ENCODE measurements at regions of chr1 and their contacts with region 1.

Region 1: GRCh38 chr1:24932284-24932683 is 2.2 kb upstream of the RUNX3 start:
- H3K4me3 Mint-ChIP-seq: peak overlapping the region; percentile 34
- H3K27ac Mint-ChIP-seq: no peak overlapping the region
- H3K4me1 Mint-ChIP-seq: peaks cover 39% of the 10 kb centered on the region
- H3K27me3 Mint-ChIP-seq: peaks cover 45% of the 10 kb centered on the region

Region 2: GRCh38 chr1:25037174-25038074 is 105.1 kb after region 1 on chr1:
- intact Hi-C with region 1: loop called (anchors 1 kb)
- H3K4me3 Mint-ChIP-seq: no peak overlapping the region
- H3K27ac Mint-ChIP-seq: no peak overlapping the region
- H3K4me1 Mint-ChIP-seq: no peaks in the 10 kb centered on the region
- H3K27me3 Mint-ChIP-seq: peaks cover 30% of the 10 kb centered on the region

Region 3: DNA sequence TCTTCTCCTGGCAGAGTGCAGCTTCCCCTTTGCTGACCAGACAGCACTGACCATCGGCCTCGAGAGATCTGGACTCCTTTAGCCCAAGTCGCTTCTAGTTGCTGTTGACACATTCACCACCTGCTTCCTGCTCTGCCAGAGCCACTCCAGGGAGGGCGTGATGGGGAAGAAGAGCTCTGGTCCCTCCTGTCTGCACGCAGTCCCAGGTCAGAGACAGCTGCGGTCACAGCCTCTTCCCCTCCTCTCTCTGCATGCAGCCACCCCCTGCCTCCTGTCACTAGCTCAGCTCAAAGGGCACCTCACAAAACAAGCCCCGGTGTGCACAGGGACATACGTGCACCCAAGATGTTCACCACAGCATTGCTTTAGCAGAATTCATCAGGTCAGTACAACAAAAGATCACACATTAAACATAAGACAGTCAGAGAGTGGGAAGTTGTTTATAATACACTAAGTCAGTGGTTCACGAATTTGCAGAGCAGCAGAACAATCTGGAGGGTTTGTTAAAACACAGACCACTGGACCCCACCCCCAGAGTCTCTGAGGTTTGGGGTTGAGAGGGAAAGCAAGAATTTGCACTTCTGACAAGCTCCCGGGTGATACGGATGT is 167.2 kb after region 1 on chr1:
- intact Hi-C with region 1: loop called (anchors 1 kb)
- H3K4me3 Mint-ChIP-seq: no peak overlapping the region
- H3K27ac Mint-ChIP-seq: peak overlapping the region; percentile 31
- H3K4me1 Mint-ChIP-seq: peaks cover 40% of the 10 kb centered on the region
- H3K27me3 Mint-ChIP-seq: peaks cover 13% of the 10 kb centered on the region

Measured in dendritic cell treated with granulocyte-macrophage colony-stimulating factor and Interleukin-4, amounts not matched to agents 40 ng/mL and 50 ng/mL, for 4 days (primary cell).